CD4-positive, alpha-beta memory T cell (primary cell): ENCODE measurements at regions of chr1 and their contacts with region 1.

Region 1: DNA sequence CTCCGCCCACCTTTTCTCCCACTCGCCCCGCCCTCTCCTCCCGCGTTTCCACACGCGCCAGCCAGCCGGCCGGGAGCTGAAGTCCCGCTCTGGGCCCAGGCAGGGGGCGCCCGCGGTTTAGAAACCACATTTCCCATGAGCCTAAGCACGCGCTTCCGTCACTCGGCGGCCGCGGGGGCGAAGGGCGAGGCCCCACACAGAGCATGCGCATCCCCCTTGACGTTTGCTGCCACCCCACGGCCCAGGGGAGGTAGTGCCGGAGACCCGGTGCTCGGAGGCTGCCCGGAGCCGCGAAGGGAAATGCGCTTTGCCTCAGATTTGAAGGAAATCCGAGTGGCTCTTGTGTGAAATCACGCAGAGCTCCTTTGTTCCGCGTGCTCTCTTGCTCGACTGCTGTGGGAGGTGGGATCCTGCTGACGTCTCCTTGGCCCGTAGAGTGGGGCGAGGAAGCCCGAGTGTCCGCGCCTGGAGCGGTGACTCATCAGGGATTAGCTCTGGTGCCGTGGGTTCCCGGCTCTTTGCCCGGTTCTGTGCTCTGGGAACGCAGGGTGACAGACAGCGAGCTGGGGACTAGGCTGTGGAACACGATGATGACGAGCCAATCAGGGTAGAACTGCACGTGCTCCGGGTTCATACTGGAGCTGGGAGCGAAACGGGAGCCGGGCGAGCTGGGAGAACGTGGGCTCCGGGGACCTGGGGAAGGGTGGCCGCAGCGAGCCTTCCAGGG is 407 bp upstream of the B3GALNT2 start:
- DNase-seq: peak; percentile 97 to 99 (median 98)
- H3K4me3 ChIP-seq: peak overlapping the region; percentile 74
- H3K4me3 Mint-ChIP-seq: peak overlapping the region; percentile 92 to 98 (median 96)
- H3K27ac ChIP-seq: peak overlapping the region; percentile 85
- H3K27ac Mint-ChIP-seq: peak overlapping the region; percentile 97 to 100 (median 98)
- H3K4me1 ChIP-seq: peaks cover 20% of the 10 kb centered on the region
- H3K4me1 Mint-ChIP-seq: peaks cover 12 to 32% (median 19%) of the 10 kb centered on the region in 4 donors
- H3K27me3 ChIP-seq: no peaks in the 10 kb centered on the region
- H3K27me3 Mint-ChIP-seq: peaks cover 0 to 1% of the 10 kb centered on the region in 2 donors

Region 2: DNA sequence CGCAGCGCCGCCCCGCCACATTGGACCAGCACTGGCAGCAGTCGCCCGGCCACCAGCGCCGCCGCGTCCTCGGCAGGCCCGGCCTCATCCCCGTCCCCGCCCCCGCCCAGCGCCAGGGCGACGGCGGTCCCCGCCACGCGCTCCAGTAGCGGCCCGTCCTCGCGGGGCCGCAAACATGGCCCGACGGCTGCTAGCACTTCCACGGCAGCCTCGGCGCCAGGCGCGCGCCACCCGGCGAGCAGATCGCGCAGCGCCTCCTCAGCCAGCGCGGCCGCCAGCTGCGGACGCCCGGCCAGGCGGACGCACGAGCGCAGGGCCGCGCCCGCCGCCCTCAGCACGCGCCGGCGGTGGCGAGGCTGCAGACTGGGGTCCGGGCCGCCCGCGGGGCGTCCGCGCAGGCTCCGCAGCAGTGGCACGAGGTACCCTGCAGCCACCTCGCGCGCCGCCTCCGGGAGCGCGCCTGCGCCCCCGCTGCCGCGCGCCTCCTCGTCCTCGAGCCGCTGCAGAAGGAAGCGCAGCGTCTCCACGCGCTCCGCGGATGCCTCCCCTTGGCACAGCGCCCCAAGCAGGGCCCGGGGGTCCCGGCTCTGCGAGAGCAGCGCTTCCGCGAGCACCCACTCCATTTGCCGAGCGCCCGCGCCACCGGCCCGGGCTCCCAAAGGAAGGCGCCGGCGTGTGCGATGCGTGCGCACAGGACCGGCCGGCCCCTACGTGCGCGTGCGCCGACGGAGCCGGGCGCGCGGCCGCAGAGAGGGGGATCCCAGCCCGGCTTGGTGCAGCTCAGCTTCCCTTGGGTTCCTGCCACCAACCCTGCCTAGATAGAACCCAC is 1026.0 kb before region 1 on chr1 and contains the start of gene TARBP1:
- CTCF ChIA-PET with region 1: interaction called, 3 read pairs
- POLR2A ChIA-PET with region 1: interaction called, 7 read pairs
- intact Hi-C with region 1: loop called (anchors 5 kb)
- DNase-seq: peak; percentile 73 to 83 (median 82)
- H3K4me3 ChIP-seq: peak within 1 kb of the TSS; percentile 47 to 63
- H3K4me3 Mint-ChIP-seq: peak within 1 kb of the TSS; percentile 87 to 93 (median 90)
- H3K27ac ChIP-seq: peak within 1 kb of the TSS; percentile 42
- H3K27ac Mint-ChIP-seq: peak within 1 kb of the TSS; percentile 57 to 96 (median 89)
- H3K4me1 ChIP-seq: peaks cover 29% of the 10 kb centered on the region
- H3K4me1 Mint-ChIP-seq: peaks cover 15 to 44% (median 27%) of the 10 kb centered on the region in 4 donors
- H3K27me3 ChIP-seq: no peaks in the 10 kb centered on the region
- H3K27me3 Mint-ChIP-seq: peaks cover 5 to 9% of the 10 kb centered on the region in 2 donors
- total RNA-seq, gene TARBP1: 25.8 to 27.5 TPM

Region 3: DNA sequence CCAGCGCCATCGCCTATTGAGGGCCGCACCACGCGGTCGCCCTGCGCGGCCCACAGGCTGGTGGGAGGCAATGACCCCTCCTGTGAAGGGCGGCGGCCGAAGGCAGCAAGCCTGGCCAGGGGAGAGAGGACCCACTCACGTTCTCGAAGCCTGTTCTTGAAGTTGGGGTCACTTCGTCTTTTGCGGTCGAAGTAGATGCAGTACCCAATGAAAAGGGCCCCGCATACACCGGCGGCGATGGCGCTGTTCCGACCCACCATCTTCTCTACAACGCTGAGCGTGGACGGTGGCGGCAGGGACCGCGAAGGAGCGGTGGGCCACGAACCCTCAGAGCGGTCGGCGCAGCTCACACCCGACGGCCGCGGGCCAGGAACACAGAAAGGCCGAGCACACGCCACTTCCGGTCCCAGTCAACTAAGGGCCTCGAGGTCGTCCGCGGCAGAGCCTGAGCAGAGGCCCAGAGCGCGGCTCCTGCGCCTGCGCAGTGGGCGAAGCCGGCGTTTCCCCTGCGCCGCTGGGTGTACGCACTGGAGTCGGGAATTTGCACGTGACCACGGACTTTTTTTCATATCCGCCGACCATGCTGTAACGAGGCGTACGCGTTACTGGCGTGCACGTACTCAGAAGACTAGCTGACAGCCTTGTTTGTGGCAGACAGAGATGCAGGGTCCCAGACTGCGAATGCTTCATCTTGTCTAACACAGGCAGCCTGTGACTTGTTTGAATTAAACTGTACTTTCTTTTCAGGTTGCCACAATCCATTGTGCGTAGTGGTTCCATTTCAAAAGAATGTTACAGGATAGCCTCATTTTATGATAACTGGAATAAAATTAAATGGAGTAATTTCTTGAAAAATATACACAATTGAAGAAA is 376.0 kb before region 1 on chr1 and contains the start of gene TOMM20:
- CTCF ChIA-PET with region 1: no interaction called
- POLR2A ChIA-PET with region 1: interaction called, 3 read pairs
- intact Hi-C with region 1: loop called (anchors 5 kb)
- DNase-seq: peak; percentile 95 to 97 (median 96)
- H3K4me3 ChIP-seq: peak within 1 kb of the TSS; percentile 64 to 83
- H3K4me3 Mint-ChIP-seq: peak within 1 kb of the TSS; percentile 89 to 98 (median 97)
- H3K27ac ChIP-seq: peak within 1 kb of the TSS; percentile 94
- H3K27ac Mint-ChIP-seq: peak within 1 kb of the TSS; percentile 95 to 99 (median 97)
- H3K4me1 ChIP-seq: peaks cover 41% of the 10 kb centered on the region
- H3K4me1 Mint-ChIP-seq: peaks cover 19 to 51% (median 32%) of the 10 kb centered on the region in 4 donors
- H3K27me3 ChIP-seq: no peaks in the 10 kb centered on the region
- H3K27me3 Mint-ChIP-seq: no peaks in the 10 kb centered on the region
- total RNA-seq, gene TOMM20: 102 to 108 TPM

Region 4: DNA sequence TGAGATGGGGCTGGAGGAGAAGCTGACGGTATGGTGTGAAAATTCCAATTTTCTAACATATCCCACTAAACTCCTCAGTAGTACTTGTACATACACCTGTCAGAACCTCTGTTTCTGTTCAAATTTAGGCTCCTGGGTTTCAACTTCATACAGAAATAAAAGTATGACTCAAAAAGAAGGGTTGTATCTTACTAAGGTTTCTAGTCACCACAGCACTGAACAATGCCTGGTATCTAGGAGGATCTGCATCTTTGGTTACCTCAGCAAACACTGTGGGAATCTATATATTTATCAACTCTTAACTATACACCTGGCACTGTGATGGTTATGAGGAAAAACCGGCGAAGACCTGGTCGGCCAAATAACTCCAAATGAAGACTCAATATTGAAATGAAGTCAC is 357.4 kb before region 1 on chr1:
- CTCF ChIA-PET with region 1: no interaction called
- POLR2A ChIA-PET with region 1: no interaction called
- intact Hi-C with region 1: no loop called
- DNase-seq: no peak
- H3K4me3 ChIP-seq: no peak overlapping the region
- H3K4me3 Mint-ChIP-seq: no peak overlapping the region
- H3K27ac ChIP-seq: no peak overlapping the region
- H3K27ac Mint-ChIP-seq: peak overlapping the region in 1 of 7 donors; percentile 68
- H3K4me1 ChIP-seq: peaks cover 11% of the 10 kb centered on the region
- H3K4me1 Mint-ChIP-seq: peaks cover 17 to 24% (median 21%) of the 10 kb centered on the region in 4 donors
- H3K27me3 ChIP-seq: no peaks in the 10 kb centered on the region
- H3K27me3 Mint-ChIP-seq: no peaks in the 10 kb centered on the region

Region 5: GRCh38 chr1:235160957-235161684 is 343.5 kb before region 1 on chr1 and contains the start of gene RBM34:
- CTCF ChIA-PET with region 1: no interaction called
- POLR2A ChIA-PET with region 1: interaction called, 6 read pairs
- intact Hi-C with region 1: loop called (anchors 2 kb)
- DNase-seq: peak; percentile 90 to 93 (median 91)
- H3K4me3 ChIP-seq: peak within 1 kb of the TSS; percentile 79 to 80
- H3K4me3 Mint-ChIP-seq: peak within 1 kb of the TSS; percentile 94 to 99 (median 98)
- H3K27ac ChIP-seq: peak within 1 kb of the TSS; percentile 92
- H3K27ac Mint-ChIP-seq: peak within 1 kb of the TSS; percentile 95 to 99 (median 98)
- H3K4me1 ChIP-seq: peaks cover 50% of the 10 kb centered on the region
- H3K4me1 Mint-ChIP-seq: peaks cover 15 to 30% (median 22%) of the 10 kb centered on the region in 4 donors
- H3K27me3 ChIP-seq: no peaks in the 10 kb centered on the region
- H3K27me3 Mint-ChIP-seq: no peaks in the 10 kb centered on the region
- total RNA-seq, gene RBM34: 120 TPM

Region 6: DNA sequence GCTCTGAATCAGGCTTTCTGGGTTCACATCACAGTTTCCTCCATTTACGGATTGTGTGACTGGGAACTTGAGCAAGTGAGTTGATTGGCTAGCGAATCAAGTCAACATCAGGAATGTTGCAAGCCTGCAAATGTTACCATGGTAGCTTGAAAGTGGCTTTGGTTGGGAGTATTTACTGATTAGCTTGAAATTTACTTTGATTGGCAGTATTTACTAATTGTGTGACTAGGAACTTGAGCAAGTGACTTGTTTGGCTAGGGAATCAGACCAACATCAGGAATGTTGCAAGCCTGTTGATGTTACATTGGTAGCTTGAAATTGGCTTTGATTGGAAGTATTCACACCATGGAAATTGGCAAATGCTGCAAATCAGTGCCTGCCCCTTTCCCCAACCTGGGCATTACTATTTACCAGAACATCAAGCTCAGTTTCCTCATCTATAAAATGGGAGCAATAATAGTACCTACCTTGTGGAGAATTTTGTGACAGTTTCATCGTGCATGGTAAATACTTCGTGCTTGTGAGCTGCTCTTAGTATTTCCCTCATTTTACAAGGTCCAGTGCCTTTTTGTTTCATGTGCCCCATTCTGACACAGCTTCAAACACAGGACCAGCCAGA is 22.6 kb after region 1 on chr1:
- CTCF ChIA-PET with region 1: no interaction called
- POLR2A ChIA-PET with region 1: no interaction called
- intact Hi-C with region 1: no loop called
- DNase-seq: no peak
- H3K4me3 ChIP-seq: no peak overlapping the region
- H3K4me3 Mint-ChIP-seq: no peak overlapping the region
- H3K27ac ChIP-seq: no peak overlapping the region
- H3K27ac Mint-ChIP-seq: no peak overlapping the region
- H3K4me1 ChIP-seq: no peaks in the 10 kb centered on the region
- H3K4me1 Mint-ChIP-seq: no peaks in the 10 kb centered on the region
- H3K27me3 ChIP-seq: no peaks in the 10 kb centered on the region
- H3K27me3 Mint-ChIP-seq: peaks cover 0 to 2% of the 10 kb centered on the region in 2 donors

Region 7: DNA sequence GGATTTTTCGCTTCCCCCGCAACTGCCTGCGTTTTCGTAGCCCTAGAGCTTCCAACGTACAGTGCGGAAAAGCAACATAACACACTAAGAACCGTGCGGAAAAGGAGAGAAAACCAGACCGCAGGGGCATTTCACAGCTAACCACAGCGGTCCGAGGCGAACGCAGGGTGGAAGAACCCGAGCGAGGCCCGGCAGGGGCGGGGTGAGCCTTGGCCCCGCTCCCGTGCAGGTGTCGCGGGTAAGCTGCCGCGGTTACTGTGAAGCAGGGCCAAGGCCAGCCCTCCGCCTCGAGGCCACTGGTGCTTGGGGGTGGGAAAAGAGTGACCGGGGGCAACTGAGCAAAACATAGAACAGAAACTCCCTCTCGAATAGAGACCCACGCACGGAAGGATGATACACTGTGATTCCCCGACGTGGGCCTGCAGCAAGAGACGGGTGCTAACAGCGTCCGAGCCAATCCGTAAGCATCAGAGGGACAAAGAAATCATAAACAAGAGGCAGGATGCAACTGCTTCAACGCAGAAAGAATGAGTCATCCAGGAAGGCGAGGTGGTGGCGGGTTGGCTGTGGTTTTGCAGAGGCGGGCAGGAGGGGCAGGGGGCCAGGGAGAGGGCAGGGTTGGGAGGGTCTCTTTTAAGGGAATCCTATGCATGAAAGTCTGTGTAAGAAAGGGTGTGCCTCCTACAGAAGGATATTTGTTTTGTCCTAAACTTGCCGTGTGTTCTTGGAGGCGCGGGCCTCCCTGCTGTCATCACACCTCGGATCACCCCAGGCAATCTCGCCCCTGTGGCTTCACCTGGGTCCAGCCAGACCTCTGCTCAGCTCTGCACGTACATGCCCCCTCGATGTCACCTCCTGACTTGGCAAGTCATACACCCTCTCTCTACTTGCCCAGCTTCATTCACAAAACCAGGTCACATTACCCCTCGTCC is 137.6 kb after region 1 on chr1:
- CTCF ChIA-PET with region 1: interaction called, 5 read pairs
- POLR2A ChIA-PET with region 1: interaction called, 12 read pairs
- intact Hi-C with region 1: loop called (anchors 5 kb)
- DNase-seq: peak; percentile 67 to 93 (median 76)
- H3K4me3 ChIP-seq: peak overlapping the region; percentile 9 to 49
- H3K4me3 Mint-ChIP-seq: peak overlapping the region; percentile 70 to 94 (median 88)
- H3K27ac ChIP-seq: peak overlapping the region; percentile 66
- H3K27ac Mint-ChIP-seq: peak overlapping the region; percentile 85 to 99 (median 95)
- H3K4me1 ChIP-seq: peaks cover 23% of the 10 kb centered on the region
- H3K4me1 Mint-ChIP-seq: peaks cover 18 to 39% (median 27%) of the 10 kb centered on the region in 4 donors
- H3K27me3 ChIP-seq: no peaks in the 10 kb centered on the region
- H3K27me3 Mint-ChIP-seq: peaks cover 0 to 4% of the 10 kb centered on the region in 2 donors